Activated CD8-positive, alpha-beta T cell treated with anti-CD3 and anti-CD28 coated beads for 36 hours (primary cell): ENCODE measurements at regions of chr7 and their contacts with region 1.

Region 1: DNA sequence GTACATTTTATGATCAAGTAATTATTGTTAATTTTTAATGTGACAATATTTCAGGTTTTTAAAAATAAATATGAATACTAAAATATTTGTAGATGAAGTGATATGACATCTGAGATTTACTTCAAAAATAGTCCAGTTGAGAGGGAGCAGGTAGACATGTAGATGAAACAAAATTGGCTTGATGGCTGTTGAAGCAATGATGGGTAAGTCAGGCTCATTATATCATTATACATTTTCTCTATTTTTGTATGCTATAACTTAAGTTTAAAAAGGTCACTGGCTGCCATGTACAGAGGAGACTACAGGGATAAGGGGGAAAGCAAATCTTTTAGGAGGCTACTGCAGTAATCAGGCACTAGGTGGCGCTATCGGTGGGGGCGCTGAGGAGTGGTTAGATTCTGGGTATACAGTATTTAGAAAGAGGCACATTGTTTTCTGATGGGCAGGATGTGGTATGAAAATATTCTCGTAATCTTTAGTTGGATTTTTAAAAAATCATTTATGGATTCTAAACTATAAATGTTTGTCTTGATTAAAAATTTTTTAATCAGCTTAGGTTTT is 189.8 kb upstream of the IMMP2L start:
- DNase-seq: peak; percentile 78
- ATAC-seq: peak; percentile 65
- H3K4me3 Mint-ChIP-seq: no peak overlapping the region
- H3K27ac Mint-ChIP-seq: no peak overlapping the region
- H3K4me1 Mint-ChIP-seq: no peaks in the 10 kb centered on the region
- H3K27me3 Mint-ChIP-seq: peaks cover 9% of the 10 kb centered on the region
- CTCF ChIP-seq: peak; percentile 78

Region 2: DNA sequence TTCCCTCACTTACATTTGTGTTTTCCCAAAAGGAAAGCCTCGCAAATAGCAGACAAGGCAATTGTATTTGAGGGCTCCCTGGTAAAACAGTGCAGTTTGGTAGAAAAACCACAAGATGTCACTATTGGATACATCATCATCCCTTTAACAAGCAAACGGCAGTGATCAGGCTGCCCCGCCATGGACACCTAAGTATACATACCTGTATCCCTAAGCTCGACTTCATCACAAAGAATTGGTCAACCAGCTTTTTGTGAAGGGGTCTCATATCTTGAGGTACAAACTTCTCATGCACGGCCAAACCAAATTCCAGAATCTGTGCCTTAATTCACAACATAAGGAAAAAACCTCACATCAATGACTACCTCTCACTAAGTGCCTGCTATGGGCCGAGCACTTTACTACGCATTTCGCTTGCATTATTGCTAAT is 10.3 kb before region 1 on chr7:
- CTCF ChIA-PET with region 1: interaction called, 15 read pairs
- POLR2A ChIA-PET with region 1: interaction called, 3 read pairs
- intact Hi-C with region 1: no loop called
- DNase-seq: peak; percentile 50
- ATAC-seq: peak; percentile 91
- H3K4me3 Mint-ChIP-seq: no peak overlapping the region
- H3K27ac Mint-ChIP-seq: no peak overlapping the region
- H3K4me1 Mint-ChIP-seq: no peaks in the 10 kb centered on the region
- H3K27me3 Mint-ChIP-seq: no peaks in the 10 kb centered on the region
- CTCF ChIP-seq: peak; percentile 71

Region 3: DNA sequence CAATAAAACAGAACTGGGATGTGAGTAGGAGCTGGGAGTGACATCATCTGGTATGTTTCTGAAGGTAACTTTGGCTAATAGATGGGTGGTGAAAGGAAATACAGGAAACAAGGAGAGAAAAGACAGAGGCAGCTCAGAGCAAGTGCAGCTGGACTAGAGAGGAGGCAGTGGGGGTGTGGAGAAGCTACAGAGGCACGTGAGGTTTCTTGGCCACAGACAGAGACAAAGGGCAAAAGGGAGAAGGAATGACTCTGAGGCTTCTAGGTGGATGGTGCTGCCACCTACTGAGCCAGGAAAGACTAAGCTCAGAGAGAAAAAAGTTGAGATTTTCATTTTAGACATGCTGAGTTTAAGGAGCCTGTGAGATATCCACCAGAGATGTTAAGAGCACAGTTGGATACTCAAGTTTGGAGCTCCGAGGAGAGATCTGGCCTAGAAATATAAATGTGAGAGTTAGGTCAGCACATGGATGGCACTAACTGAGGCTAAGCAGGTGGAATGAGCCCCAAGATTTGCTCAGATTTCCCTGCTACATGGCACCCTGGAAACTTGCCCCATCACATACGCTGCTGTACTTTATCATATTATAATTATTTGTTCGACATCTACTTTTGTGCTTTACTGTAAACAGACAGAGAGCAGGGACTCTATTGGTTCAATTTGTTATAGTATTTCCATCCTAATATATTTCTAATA is 103.2 kb after region 1 on chr7:
- CTCF ChIA-PET with region 1: interaction called, 10 read pairs
- POLR2A ChIA-PET with region 1: no interaction called
- intact Hi-C with region 1: no loop called
- DNase-seq: peak; percentile 16
- ATAC-seq: peak; percentile 60
- H3K4me3 Mint-ChIP-seq: no peak overlapping the region
- H3K27ac Mint-ChIP-seq: no peak overlapping the region
- H3K4me1 Mint-ChIP-seq: no peaks in the 10 kb centered on the region
- H3K27me3 Mint-ChIP-seq: peaks cover 5% of the 10 kb centered on the region
- CTCF ChIP-seq: peak; percentile 19

Region 4: GRCh38 chr7:112495810-112496462 is 743.8 kb after region 1 on chr7:
- CTCF ChIA-PET with region 1: interaction called, 10 read pairs
- POLR2A ChIA-PET with region 1: no interaction called
- intact Hi-C with region 1: no loop called
- DNase-seq: peak; percentile 57
- ATAC-seq: no peak
- H3K4me3 Mint-ChIP-seq: no peak overlapping the region
- H3K27ac Mint-ChIP-seq: no peak overlapping the region
- H3K4me1 Mint-ChIP-seq: no peaks in the 10 kb centered on the region
- H3K27me3 Mint-ChIP-seq: peaks cover 3% of the 10 kb centered on the region
- CTCF ChIP-seq: peak; percentile 38